GM12878 (cell line): ENCODE measurements at regions of chr15 and their contacts with region 1.

Region 1: DNA sequence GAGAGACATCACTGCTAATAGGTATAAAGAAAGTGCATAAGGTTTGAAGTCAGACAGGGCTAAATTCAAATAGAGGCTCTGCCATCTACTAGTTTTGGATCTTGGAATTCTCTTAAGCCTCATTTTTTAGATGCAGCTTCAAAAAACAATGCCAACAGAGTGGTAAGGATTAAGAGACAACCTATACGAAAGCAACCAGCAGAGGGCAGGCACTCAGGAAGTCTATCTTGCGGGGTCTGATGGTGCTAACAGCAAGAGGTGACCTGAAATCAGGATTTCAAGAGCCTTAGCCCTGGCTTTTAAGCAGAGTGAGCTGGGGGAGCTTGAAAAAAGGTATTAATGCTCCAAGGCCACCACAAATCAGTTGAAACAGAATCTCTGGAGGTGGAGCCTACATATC is 40.7 kb downstream of the LDHAL6B start:
- DNase-seq: no peak
- ATAC-seq: peak; percentile 61
- H3K4me3 ChIP-seq: no peak overlapping the region
- H3K27ac ChIP-seq: peak overlapping the region; percentile 33; the same call in 1 of the 2 replicates
- H3K4me1 ChIP-seq: peaks cover 54% of the 10 kb centered on the region
- H3K27me3 ChIP-seq: no peaks in the 10 kb centered on the region
- CTCF ChIP-seq: peak; percentile 57 to 68 (median 62)
- EP300 ChIP-seq: no peak
- POLR2A ChIP-seq: no peak
- RAD21 ChIP-seq: peak; percentile 70

Region 2: GRCh38 chr15:58980351-58980939 is 266.9 kb before region 1 on chr15:
- CTCF ChIA-PET with region 1: interaction called, 11 read pairs
- POLR2A ChIA-PET with region 1: no interaction called
- RAD21 ChIA-PET with region 1: interaction called, 4 read pairs
- SMC1A ChIA-PET with region 1: interaction called, 4 read pairs
- in situ Hi-C with region 1: no loop called
- intact Hi-C with region 1: loop called (anchors 10 kb)
- DNase-seq: no peak
- ATAC-seq: peak; percentile 39
- H3K4me3 ChIP-seq: peak overlapping the region; percentile 37
- H3K27ac ChIP-seq: peak overlapping the region; percentile 83; the same call in 1 of the 2 replicates
- H3K4me1 ChIP-seq: peaks cover 34% of the 10 kb centered on the region
- H3K27me3 ChIP-seq: no peaks in the 10 kb centered on the region
- CTCF ChIP-seq: peak; percentile 19 to 60 (median 43); a peak in 3 of 6 replicates
- EP300 ChIP-seq: no peak
- POLR2A ChIP-seq: no peak
- RAD21 ChIP-seq: peak; percentile 67

Region 3: GRCh38 chr15:59174835-59175831 is 72.2 kb before region 1 on chr15:
- CTCF ChIA-PET with region 1: interaction called, 11 read pairs
- POLR2A ChIA-PET with region 1: no interaction called
- RAD21 ChIA-PET with region 1: interaction called, 6 read pairs
- SMC1A ChIA-PET with region 1: interaction called, 11 read pairs
- in situ Hi-C with region 1: no loop called
- intact Hi-C with region 1: no loop called
- DNase-seq: no peak
- ATAC-seq: peak; percentile 78
- H3K4me3 ChIP-seq: no peak overlapping the region
- H3K27ac ChIP-seq: no peak overlapping the region
- H3K4me1 ChIP-seq: no peaks in the 10 kb centered on the region; the same call in 1 of the 2 replicates
- H3K27me3 ChIP-seq: no peaks in the 10 kb centered on the region
- CTCF ChIP-seq: peak; percentile 28 to 36 (median 31); a peak in 3 of 6 replicates
- EP300 ChIP-seq: no peak
- POLR2A ChIP-seq: no peak
- RAD21 ChIP-seq: 0 out of 2 replicates have a peak, but pooled peaks have one; percentile 12

Region 4: GRCh38 chr15:59292442-59293151 is 45.2 kb after region 1 on chr15:
- CTCF ChIA-PET with region 1: interaction called, 68 read pairs
- POLR2A ChIA-PET with region 1: interaction called, 5 read pairs
- RAD21 ChIA-PET with region 1: interaction called, 54 read pairs
- SMC1A ChIA-PET with region 1: interaction called, 64 read pairs
- in situ Hi-C with region 1: no loop called
- intact Hi-C with region 1: no loop called
- DNase-seq: no peak
- ATAC-seq: peak; percentile 33
- H3K4me3 ChIP-seq: peak overlapping the region; percentile 33; the same call in 1 of the 2 replicates
- H3K27ac ChIP-seq: no peak overlapping the region
- H3K4me1 ChIP-seq: peaks cover 57% of the 10 kb centered on the region
- H3K27me3 ChIP-seq: no peaks in the 10 kb centered on the region
- CTCF ChIP-seq: no peak
- EP300 ChIP-seq: no peak
- POLR2A ChIP-seq: no peak
- RAD21 ChIP-seq: no peak

Region 5: GRCh38 chr15:59329570-59330350 is 82.4 kb after region 1 on chr15:
- CTCF ChIA-PET with region 1: interaction called, 8 read pairs
- POLR2A ChIA-PET with region 1: interaction called, 4 read pairs
- RAD21 ChIA-PET with region 1: interaction called, 4 read pairs
- SMC1A ChIA-PET with region 1: interaction called, 25 read pairs
- in situ Hi-C with region 1: no loop called
- intact Hi-C with region 1: no loop called
- DNase-seq: no peak
- ATAC-seq: no peak; the same call in 2 of the 3 replicates
- H3K4me3 ChIP-seq: no peak overlapping the region
- H3K27ac ChIP-seq: peak overlapping the region; percentile 48; the same call in 1 of the 2 replicates
- H3K4me1 ChIP-seq: peaks cover 80% of the 10 kb centered on the region
- H3K27me3 ChIP-seq: no peaks in the 10 kb centered on the region
- CTCF ChIP-seq: no peak
- EP300 ChIP-seq: no peak
- POLR2A ChIP-seq: no peak
- RAD21 ChIP-seq: no peak

Region 6: GRCh38 chr15:59484399-59484798 is 237.0 kb after region 1 on chr15:
- CTCF ChIA-PET with region 1: interaction called, 11 read pairs
- POLR2A ChIA-PET with region 1: no interaction called
- RAD21 ChIA-PET with region 1: interaction called, 5 read pairs
- SMC1A ChIA-PET with region 1: interaction called, 4 read pairs
- in situ Hi-C with region 1: no loop called
- intact Hi-C with region 1: no loop called
- DNase-seq: no peak
- ATAC-seq: no peak
- H3K4me3 ChIP-seq: no peak overlapping the region
- H3K27ac ChIP-seq: no peak overlapping the region
- H3K4me1 ChIP-seq: peaks cover 15% of the 10 kb centered on the region
- H3K27me3 ChIP-seq: no peaks in the 10 kb centered on the region
- CTCF ChIP-seq: no peak
- EP300 ChIP-seq: no peak
- POLR2A ChIP-seq: no peak
- RAD21 ChIP-seq: no peak